ENCODE measurements at regions of chr11 and their contacts with region 1.

Region 1: GRCh38 chr11:48055292-48056132 is 75.2 kb downstream of the PTPRJ start:
- DNase-seq: peak; percentile 91
- ATAC-seq: peak; percentile 84
- H3K4me3 Mint-ChIP-seq: peak overlapping the region; percentile 69
- H3K27ac Mint-ChIP-seq: peak overlapping the region; percentile 94
- H3K4me1 Mint-ChIP-seq: peaks cover 88% of the 10 kb centered on the region
- H3K27me3 Mint-ChIP-seq: no peaks in the 10 kb centered on the region

Region 2: DNA sequence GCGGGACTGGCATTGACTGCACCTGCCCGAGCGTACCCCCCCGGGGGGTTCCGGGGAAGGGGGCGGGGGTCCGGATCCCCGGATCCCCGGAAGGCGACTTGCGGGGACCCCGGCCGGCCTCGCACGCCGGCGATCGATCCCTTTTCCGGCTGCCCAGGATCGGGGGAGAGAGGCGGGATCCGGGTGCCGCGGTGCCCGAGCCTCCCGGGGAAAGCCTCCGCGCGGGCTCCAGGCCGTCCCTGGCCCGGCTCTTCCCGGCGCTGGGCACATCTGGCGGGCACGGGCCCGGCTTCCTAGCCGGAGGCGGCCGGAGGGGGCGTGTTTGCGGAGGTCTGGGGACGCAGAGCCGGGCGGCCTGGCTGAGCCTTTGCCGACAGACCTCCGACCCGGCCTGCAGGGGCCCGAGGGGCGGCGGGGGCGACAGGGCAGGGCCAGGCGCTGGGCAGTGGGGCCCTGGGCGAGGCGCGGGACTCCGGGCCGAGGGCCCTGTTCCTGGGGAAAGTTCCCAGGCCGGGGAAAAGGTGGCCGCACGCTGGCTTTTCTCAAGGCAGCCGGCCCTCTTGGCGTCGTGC is 74.4 kb before region 1 on chr11:
- CTCF ChIA-PET with region 1: interaction called, 3 read pairs
- POLR2A ChIA-PET with region 1: interaction called, 10 read pairs
- DNase-seq: no peak
- ATAC-seq: peak; percentile 54
- H3K4me3 Mint-ChIP-seq: peak overlapping the region; percentile 98
- H3K27ac Mint-ChIP-seq: no peak overlapping the region
- H3K4me1 Mint-ChIP-seq: peaks cover 33% of the 10 kb centered on the region
- H3K27me3 Mint-ChIP-seq: peaks cover 18% of the 10 kb centered on the region

Region 3: GRCh38 chr11:48013269-48013901 is 42.1 kb before region 1 on chr11:
- CTCF ChIA-PET with region 1: interaction called, 19 read pairs
- POLR2A ChIA-PET with region 1: interaction called, 32 read pairs
- DNase-seq: peak; percentile 66
- ATAC-seq: peak; percentile 57
- H3K4me3 Mint-ChIP-seq: peak overlapping the region; percentile 36
- H3K27ac Mint-ChIP-seq: peak overlapping the region; percentile 94
- H3K4me1 Mint-ChIP-seq: peaks cover 87% of the 10 kb centered on the region
- H3K27me3 Mint-ChIP-seq: no peaks in the 10 kb centered on the region

Region 4: GRCh38 chr11:48034926-48035871 is 20.3 kb before region 1 on chr11:
- CTCF ChIA-PET with region 1: interaction called, 3 read pairs
- POLR2A ChIA-PET with region 1: interaction called, 13 read pairs
- DNase-seq: no peak
- ATAC-seq: peak; percentile 45
- H3K4me3 Mint-ChIP-seq: no peak overlapping the region
- H3K27ac Mint-ChIP-seq: peak overlapping the region; percentile 50
- H3K4me1 Mint-ChIP-seq: peaks cover 66% of the 10 kb centered on the region
- H3K27me3 Mint-ChIP-seq: no peaks in the 10 kb centered on the region

Region 5: GRCh38 chr11:48109046-48109666 is 53.6 kb after region 1 on chr11:
- CTCF ChIA-PET with region 1: interaction called, 67 read pairs
- POLR2A ChIA-PET with region 1: interaction called, 13 read pairs
- DNase-seq: no peak
- ATAC-seq: peak; percentile 35
- H3K4me3 Mint-ChIP-seq: peak overlapping the region; percentile 67
- H3K27ac Mint-ChIP-seq: peak overlapping the region; percentile 93
- H3K4me1 Mint-ChIP-seq: peaks cover 56% of the 10 kb centered on the region
- H3K27me3 Mint-ChIP-seq: no peaks in the 10 kb centered on the region

Region 6: DNA sequence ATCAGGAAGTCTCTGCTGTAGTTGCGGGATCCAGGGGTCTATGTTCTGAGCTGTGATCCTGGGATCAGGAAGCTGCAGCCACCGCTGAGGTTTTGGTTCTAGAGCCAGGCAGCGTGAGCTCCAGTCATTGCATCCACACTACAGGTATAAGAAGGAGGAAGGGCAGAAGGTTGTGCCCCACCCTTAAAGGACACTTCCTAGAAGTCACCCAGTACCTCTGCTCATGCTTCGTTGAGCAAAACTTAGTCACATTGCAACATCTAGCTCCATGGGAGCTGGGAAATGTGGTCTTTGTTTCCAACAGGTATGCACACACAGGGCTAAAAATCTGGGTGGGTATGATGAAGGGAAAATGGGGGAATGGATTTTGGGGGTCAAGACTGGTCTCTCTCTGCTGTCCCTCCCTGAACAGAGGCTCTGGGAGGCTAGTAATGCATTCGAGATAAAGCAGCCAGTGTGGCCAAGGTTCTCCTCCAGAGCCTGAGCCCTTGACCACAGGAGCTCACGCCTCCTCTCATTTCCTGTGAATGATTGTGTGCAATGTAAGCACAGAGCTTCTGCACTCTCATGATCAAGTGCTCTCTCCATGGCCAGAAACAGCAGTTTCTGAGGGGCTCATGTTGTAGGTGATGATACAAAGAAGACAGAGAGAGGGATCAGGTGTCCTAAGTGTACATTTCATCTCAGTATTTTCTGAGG is 74.3 kb after region 1 on chr11:
- CTCF ChIA-PET with region 1: no interaction called
- POLR2A ChIA-PET with region 1: no interaction called
- DNase-seq: no peak
- ATAC-seq: no peak
- H3K4me3 Mint-ChIP-seq: no peak overlapping the region
- H3K27ac Mint-ChIP-seq: peak overlapping the region; percentile 55
- H3K4me1 Mint-ChIP-seq: peaks cover 31% of the 10 kb centered on the region
- H3K27me3 Mint-ChIP-seq: no peaks in the 10 kb centered on the region